Psoas muscle (tissue), 8 donors: ENCODE measurements at regions of chr17 and their contacts with region 1.

Region 1: GRCh38 chr17:7903154-7904103 is 12.7 kb downstream of the RNF227 start:
- DNase-seq: no peak
- ATAC-seq: no peak
- H3K4me3 ChIP-seq: no peak overlapping the region
- H3K27ac ChIP-seq: no peak overlapping the region
- H3K4me1 ChIP-seq: no peaks in the 10 kb centered on the region
- H3K27me3 ChIP-seq: no peaks in the 10 kb centered on the region
- CTCF ChIP-seq: no peak

Region 2: GRCh38 chr17:7676533-7676932 is 226.9 kb before region 1 on chr17:
- intact Hi-C with region 1: no loop called
- DNase-seq: no peak
- ATAC-seq: no peak
- H3K4me3 ChIP-seq: no peak overlapping the region
- H3K27ac ChIP-seq: no peak overlapping the region
- H3K4me1 ChIP-seq: no peaks in the 10 kb centered on the region
- H3K27me3 ChIP-seq: no peaks in the 10 kb centered on the region
- CTCF ChIP-seq: no peak

Region 3: GRCh38 chr17:7956228-7956965 is 53.0 kb after region 1 on chr17:
- intact Hi-C with region 1: loop called in 1 of 2 experiments (anchors 1 kb)
- DNase-seq: no peak
- ATAC-seq: no peak
- H3K4me3 ChIP-seq: no peak overlapping the region
- H3K27ac ChIP-seq: no peak overlapping the region
- H3K4me1 ChIP-seq: no peaks in the 10 kb centered on the region
- H3K27me3 ChIP-seq: peaks cover 2 to 16% (median 3%) of the 10 kb centered on the region in 3 donors
- CTCF ChIP-seq: no peak

Region 4: DNA sequence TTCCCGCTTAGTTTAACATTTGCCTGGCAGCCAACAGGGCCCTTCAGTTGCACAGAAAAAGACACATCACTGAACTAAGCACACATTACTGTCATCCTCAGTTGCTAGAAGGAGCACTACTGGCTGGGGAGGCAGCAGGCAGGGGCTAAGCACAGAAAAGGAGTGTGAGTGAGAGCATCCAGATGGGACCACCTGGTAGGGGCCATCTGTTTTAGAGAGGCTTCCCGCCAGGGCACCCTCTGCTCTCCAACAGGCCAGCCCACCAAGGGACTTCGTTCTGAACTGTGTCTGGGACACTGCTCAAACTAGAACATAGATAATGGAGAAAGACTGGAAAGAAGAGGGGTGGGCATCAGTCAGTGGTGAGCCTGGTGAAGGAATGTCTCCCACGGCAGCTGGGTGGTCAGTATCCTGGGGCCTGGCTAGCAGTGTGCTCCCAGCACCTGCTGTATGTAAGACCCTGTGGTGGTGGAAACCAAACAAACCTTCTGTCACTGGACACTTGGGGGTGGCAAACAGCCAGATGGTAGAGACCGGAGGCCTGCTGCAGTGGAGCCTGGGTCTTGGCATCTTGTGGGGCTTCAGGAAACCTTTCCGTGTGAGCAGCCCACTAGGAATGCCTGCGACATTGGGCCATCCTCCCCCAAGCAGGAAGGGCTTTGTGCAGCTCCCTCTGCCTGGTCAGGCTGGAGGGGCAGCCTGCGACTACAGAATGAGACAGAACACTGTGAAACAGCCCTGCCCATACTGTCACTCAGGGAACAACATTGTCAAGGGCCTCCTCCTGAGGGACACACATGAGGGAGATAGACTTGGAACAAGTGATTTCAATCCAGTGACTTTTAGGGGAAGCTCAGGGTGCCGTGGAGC is 372.2 kb after region 1 on chr17:
- intact Hi-C with region 1: no loop called
- DNase-seq: no peak
- ATAC-seq: no peak
- H3K4me3 ChIP-seq: no peak overlapping the region
- H3K27ac ChIP-seq: no peak overlapping the region
- H3K4me1 ChIP-seq: no peaks in the 10 kb centered on the region
- H3K27me3 ChIP-seq: no peaks in the 10 kb centered on the region
- CTCF ChIP-seq: no peak